ENCODE measurements at regions of chr14 and their contacts with region 1.

Region 1: GRCh38 chr14:89973234-89973823 is 17.6 kb downstream of the TDP1 start:
- DNase-seq: peak; percentile 69 to 84 (median 76)
- H3K4me3 ChIP-seq: no peak overlapping the region
- H3K27ac ChIP-seq: no peak overlapping the region
- H3K4me1 ChIP-seq: no peaks in the 10 kb centered on the region
- H3K27me3 ChIP-seq: no peaks in the 10 kb centered on the region
- CTCF ChIP-seq: peak; percentile 76

Region 2: DNA sequence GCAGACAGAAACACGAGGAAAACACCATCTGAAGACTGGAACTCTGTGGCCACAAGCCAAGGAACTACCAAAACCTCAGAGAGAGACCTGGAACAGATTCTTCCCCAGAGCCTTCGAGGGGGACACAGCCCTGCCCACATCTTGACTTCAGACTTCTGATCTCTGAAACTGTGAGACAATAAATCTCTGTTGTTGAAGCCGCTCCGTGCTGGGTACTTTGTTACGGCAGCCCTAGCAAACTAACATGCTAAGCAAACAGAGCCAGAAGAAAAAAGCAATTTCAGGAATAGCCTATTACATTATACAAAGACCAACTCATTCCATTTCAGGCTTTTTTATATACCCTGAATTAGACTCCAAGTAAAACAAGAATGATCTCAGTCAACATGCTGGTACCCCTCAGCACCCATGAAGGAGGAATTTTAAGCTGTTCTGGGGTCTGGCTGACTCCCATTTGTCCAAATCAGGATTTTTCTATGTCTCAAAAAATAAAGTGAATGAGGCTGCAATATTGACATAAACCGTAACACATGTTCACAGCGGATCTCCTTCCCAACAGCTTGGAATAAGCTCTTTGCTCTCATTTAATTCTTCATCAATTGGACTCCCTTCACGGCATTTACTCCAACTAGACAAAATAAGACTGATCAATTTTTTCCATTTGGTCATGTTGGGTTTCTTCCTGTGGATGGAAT is 746.4 kb before region 1 on chr14:
- intact Hi-C with region 1: no loop called
- DNase-seq: peak in 1 of 5 donors; percentile 32
- H3K4me3 ChIP-seq: no peak overlapping the region
- H3K27ac ChIP-seq: no peak overlapping the region
- H3K4me1 ChIP-seq: peaks cover 0 to 3% (median 0%) of the 10 kb centered on the region in 3 donors
- H3K27me3 ChIP-seq: no peaks in the 10 kb centered on the region
- CTCF ChIP-seq: no peak

Region 3: GRCh38 chr14:89792489-89793366 is 180.6 kb before region 1 on chr14:
- intact Hi-C with region 1: no loop called
- DNase-seq: peak in 3 of 5 donors; percentile 32 to 63 (median 62)
- H3K4me3 ChIP-seq: no peak overlapping the region
- H3K27ac ChIP-seq: no peak overlapping the region
- H3K4me1 ChIP-seq: no peaks in the 10 kb centered on the region
- H3K27me3 ChIP-seq: no peaks in the 10 kb centered on the region
- CTCF ChIP-seq: no peak

Region 4: GRCh38 chr14:90235179-90235976 is 262.0 kb after region 1 on chr14:
- intact Hi-C with region 1: loop called (anchors 10 kb)
- DNase-seq: peak; percentile 62 to 82 (median 74)
- H3K4me3 ChIP-seq: no peak overlapping the region
- H3K27ac ChIP-seq: no peak overlapping the region
- H3K4me1 ChIP-seq: peaks cover 0 to 4% (median 0%) of the 10 kb centered on the region in 3 donors
- H3K27me3 ChIP-seq: no peaks in the 10 kb centered on the region
- CTCF ChIP-seq: peak; percentile 97